ENCODE measurements at regions of chr4 and their contacts with region 1.

Region 1: DNA sequence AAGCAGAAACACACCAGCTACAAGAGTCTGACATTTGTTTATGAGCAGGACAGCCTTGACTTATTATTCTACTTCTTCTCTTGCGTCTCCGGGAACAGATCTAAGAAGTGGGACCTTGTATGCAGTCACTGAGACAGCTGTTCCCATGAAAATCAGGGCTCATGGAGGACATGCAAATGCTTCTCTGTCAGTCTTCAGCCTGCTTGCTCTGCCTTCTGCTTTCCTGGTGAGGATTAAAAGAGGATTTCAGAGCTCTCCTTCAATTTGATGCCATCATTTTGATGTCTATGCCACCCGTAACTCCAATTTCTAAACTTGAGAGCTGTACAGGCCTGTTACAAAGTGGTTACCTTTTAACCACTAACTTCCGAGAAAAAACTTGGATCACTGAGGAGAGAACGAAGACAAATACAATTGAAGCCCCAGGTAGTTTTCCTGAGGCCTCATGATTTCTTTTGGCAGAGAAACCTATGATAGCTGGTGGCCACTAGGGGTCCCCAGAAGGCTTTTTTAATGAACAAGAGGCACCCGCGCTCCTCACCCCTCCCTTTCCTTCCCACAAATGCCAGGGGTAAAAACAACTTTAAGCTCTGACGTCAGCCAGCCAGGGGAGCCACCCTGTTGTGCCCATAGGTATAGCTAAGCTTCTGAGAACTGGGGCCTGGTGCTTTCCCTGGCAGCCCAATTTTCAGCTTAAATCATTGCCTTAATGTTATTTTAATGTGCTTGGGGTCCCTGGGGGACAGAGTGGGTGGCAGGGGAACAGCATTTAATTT is 97.0 kb downstream of the DDIT4L start:
- DNase-seq: peak; percentile 91
- H3K4me3 Mint-ChIP-seq: no peak overlapping the region
- H3K27ac Mint-ChIP-seq: peak overlapping the region; percentile 89
- H3K4me1 Mint-ChIP-seq: peaks cover 40% of the 10 kb centered on the region
- H3K27me3 Mint-ChIP-seq: no peaks in the 10 kb centered on the region

Region 2: GRCh38 chr4:100082852-100083251 is 10.4 kb before region 1 on chr4:
- CTCF ChIA-PET with region 1: interaction called, 16 read pairs
- POLR2A ChIA-PET with region 1: no interaction called
- DNase-seq: no peak
- H3K4me3 Mint-ChIP-seq: no peak overlapping the region
- H3K27ac Mint-ChIP-seq: no peak overlapping the region
- H3K4me1 Mint-ChIP-seq: peaks cover 9% of the 10 kb centered on the region
- H3K27me3 Mint-ChIP-seq: no peaks in the 10 kb centered on the region

Region 3: GRCh38 chr4:100106982-100107381 is 13.7 kb after region 1 on chr4:
- CTCF ChIA-PET with region 1: interaction called, 21 read pairs
- POLR2A ChIA-PET with region 1: no interaction called
- DNase-seq: peak; percentile 67
- H3K4me3 Mint-ChIP-seq: peak overlapping the region; percentile 15
- H3K27ac Mint-ChIP-seq: peak overlapping the region; percentile 78
- H3K4me1 Mint-ChIP-seq: peaks cover 28% of the 10 kb centered on the region
- H3K27me3 Mint-ChIP-seq: no peaks in the 10 kb centered on the region

Measured in activated CD4-positive, alpha-beta T cell treated with anti-CD3 and anti-CD28 coated beads, Interleukin-2, amount 10 ng/mL, durations not matched to agents 7 days and 5 days (primary cell).